ENCODE measurements at regions of chr20 and their contacts with region 1.

Region 1: DNA sequence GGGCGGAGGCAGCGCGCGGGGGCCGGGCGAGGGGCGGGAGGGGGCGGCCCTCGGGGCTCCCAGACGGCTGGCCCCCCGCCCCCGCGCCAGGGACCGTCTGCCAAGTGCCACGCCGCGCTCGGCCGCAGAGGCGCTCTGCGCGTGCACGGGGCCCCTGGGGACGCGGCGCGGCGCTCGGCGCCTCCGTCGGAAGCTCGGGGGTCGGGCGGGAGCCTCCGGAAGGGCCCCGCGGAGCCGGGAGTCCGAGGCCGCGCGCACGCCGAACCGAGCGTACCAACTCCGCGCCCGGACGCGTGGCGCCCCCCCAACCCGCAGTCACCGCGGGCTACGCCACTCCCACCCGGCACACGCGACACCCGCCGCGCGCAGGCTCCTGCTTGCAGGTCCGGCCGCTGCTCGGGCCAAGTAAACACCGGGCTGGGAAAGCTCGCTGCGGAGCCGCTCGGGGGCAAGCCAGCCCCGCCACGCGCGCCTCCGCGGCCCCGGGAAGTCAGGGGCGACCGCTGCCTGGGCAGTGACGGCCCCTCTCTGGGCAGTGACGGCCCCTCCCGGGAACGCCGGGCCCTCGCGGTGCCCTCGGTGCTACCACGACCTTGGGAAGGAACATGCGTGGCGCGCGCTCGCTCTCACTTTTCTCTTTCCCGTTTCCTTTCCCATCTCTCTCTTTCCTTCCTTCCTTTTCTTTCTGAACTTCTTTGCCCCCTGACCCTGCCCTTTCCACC is 384 bp upstream of the PREX1 start:
- DNase-seq: peak; percentile 77
- H3K4me3 Mint-ChIP-seq: peak overlapping the region; percentile 80
- H3K27ac Mint-ChIP-seq: peak overlapping the region; percentile 53
- H3K4me1 Mint-ChIP-seq: peaks cover 39% of the 10 kb centered on the region
- H3K27me3 Mint-ChIP-seq: peaks cover 35% of the 10 kb centered on the region

Region 2: GRCh38 chr20:48657475-48658470 is 170.4 kb before region 1 on chr20:
- intact Hi-C with region 1: loop called (anchors 5 kb)
- DNase-seq: peak; percentile 58
- H3K4me3 Mint-ChIP-seq: no peak overlapping the region
- H3K27ac Mint-ChIP-seq: no peak overlapping the region
- H3K4me1 Mint-ChIP-seq: no peaks in the 10 kb centered on the region
- H3K27me3 Mint-ChIP-seq: no peaks in the 10 kb centered on the region

Region 3: GRCh38 chr20:48738399-48739304 is 89.5 kb before region 1 on chr20:
- intact Hi-C with region 1: loop called (anchors 1 kb)
- DNase-seq: peak; percentile 70
- H3K4me3 Mint-ChIP-seq: peak overlapping the region; percentile 62
- H3K27ac Mint-ChIP-seq: peak overlapping the region; percentile 89
- H3K4me1 Mint-ChIP-seq: peaks cover 54% of the 10 kb centered on the region
- H3K27me3 Mint-ChIP-seq: no peaks in the 10 kb centered on the region

Region 4: DNA sequence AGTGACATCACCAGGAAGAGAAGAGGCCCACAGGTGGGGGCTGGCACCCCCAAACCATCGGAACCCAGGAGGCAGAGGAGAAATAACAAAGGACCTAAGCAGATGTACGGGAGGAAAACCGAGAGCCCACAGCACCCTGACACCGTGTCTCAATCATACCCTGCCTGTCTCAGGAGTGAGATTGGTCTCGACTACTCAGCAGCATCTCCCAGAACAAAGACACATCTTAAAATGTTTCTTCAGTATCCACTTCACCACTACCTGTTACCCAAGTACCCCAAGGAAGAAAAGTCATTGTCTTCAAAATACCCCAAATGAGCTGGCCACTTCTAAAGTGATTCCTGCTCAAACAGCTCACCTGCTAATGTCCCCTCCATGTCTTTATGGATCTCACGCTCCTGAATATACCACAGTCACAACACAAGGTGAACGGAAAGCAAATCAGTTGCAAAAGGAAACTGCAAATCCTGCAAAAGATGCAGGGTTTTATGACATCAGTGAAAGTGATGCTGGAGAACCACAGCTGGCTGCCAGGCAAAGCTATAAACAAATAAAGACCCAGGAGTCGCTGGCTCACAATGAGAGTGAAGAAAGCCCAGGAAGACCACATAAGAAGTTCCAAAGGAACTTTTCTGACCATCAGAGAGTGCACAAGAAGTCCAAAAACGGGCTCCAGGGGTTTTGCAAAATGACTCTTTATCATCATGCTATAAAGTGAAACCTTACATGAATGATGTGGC is 44.5 kb before region 1 on chr20:
- intact Hi-C with region 1: loop called (anchors 1 kb)
- DNase-seq: peak; percentile 27
- H3K4me3 Mint-ChIP-seq: no peak overlapping the region
- H3K27ac Mint-ChIP-seq: no peak overlapping the region
- H3K4me1 Mint-ChIP-seq: peaks cover 41% of the 10 kb centered on the region
- H3K27me3 Mint-ChIP-seq: peaks cover 2% of the 10 kb centered on the region

Region 5: DNA sequence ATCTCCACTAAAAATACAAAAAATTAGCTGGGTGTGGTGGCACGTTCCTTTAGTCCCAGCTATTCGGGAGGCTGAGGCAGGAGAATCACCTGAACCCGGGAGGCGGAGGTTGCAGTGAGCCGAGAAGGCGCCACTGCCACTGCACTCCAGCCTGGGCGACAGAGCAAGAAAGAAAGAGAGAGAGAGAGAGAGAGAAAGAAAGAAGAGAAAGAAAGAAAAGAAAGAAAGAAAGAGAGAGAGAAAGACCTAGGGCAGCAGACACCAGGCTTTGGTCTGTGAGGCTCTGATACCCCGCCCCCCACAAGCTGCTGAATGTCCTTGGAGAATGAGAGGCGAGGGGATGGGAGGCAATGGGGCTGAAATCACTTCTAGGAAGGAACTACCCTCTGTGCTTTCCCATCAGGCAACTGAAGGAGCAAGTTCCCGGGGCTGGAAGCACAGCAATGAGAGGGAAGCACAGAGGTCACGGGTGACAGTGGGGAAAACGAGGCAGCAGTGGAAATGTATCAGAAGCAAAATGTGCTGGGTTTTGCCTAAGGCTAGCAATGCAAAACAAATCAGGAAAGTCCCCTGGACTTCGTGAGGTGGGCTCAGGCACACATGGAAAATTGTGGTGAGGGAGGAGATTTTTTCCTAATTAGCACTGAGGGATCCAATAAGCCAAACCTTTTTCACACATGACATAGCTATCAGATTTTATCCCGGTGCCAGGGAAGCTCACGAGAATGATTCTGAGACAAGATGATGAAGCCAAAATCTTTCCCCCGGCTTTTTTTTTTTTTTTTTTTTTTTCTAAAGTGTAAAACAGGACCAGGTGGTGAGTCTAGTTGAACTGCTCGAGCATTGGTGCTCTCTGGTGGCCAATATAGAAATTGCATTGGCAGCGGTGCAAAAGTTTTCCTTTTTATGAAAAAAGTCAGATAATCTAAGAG is 76.4 kb after region 1 on chr20:
- intact Hi-C with region 1: loop called (anchors 5 kb)
- DNase-seq: peak; percentile 54
- H3K4me3 Mint-ChIP-seq: no peak overlapping the region
- H3K27ac Mint-ChIP-seq: no peak overlapping the region
- H3K4me1 Mint-ChIP-seq: peaks cover 13% of the 10 kb centered on the region
- H3K27me3 Mint-ChIP-seq: peaks cover 3% of the 10 kb centered on the region

Region 6: DNA sequence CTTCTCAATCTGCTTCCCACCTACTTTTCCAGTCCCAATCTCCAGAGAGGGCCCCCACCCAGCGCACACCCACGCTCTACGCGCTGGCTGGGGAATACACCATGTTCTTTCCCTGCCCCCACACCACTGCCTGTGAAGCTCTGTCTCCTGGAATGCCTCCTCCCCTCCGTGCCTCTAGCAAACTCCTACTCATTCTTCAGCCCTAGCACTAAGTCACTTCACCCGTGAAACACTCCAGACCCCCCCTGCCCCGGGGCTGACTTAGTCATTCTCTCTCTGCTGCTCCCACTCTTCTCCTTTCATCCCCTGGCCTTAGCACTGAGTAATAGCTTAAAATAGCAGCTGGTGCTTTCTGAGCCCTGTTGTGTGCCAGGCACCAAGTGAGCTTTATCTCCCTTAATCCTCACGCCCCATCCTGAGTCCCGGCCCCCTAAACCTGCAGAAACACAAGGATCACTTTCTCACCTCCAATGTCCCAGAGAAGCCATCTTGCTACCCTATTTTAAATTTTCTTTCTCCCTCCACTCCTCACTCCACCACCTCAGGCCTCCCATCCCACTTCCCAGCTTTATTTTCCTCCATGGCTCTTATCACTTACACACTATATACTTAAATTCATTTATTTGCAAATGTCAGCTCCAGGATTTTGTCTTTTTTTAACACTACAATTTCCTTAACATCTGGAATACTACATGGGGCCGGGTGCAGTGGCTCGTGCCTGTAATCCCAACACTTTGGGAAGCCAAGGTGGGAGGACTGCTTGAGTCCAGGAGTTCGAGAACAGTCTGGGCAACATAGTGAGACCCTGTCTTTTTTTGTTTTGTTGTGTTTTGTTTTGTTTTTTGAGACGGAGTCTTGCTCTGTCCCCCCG is 1896.9 kb after region 1 on chr20:
- intact Hi-C with region 1: no loop called
- DNase-seq: no peak
- H3K4me3 Mint-ChIP-seq: no peak overlapping the region
- H3K27ac Mint-ChIP-seq: no peak overlapping the region
- H3K4me1 Mint-ChIP-seq: peaks cover 12% of the 10 kb centered on the region
- H3K27me3 Mint-ChIP-seq: no peaks in the 10 kb centered on the region

Measured in activated T-helper 2 cell treated with anti-CD3 and anti-CD28 coated beads, Interferon-gamma antibody, Interleukin-2, Interleukin-4, amounts not matched to agents 10 μg/mL and 5 μg/mL and 100 μg/mL, durations not matched to agents 14 hours and 24 hours and 36 hours (primary cell).